ENCODE measurements at regions of chr6 and their contacts with region 1.

Region 1: DNA sequence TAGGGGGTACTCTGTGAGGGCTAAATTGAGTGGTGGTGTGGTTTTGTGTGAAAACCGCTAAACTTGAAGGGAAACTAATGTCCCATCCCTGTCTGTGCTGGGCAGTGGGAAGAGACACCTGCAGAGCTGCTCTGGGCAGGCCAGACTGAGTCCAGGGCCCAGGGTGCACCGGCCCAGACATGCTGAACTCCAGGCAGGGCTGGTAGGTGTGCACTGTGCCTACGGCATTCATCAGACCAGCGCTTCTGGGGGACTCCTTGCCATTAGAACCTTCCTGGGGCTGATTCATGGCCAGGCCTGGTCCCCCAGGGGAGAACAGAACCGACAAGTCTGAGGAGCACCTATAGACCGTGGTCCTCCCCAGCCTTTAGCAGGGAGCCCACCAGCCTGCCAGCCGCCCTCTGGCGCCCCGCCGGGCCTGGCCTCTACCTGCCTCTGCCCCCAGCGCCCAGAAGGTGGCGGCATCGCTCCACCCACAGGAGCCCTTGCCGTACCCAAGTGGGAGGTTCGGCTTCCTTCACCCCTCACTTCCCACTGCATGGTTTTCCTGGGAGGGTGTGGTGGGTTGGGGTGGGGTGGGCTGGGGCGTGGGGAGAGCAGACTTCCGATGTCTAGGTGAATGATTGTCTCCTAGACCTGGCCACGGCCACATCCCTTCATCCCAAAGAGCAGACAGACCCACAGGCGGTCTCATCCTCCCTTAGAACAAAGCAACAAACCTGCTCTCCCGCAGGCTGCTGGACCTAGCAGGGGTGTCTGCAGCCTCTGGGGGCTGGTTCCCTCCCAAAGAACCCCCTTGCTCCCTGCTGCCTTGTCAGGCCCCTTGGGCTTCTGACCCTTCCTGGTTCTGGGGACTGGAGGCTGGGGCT is 15.5 kb downstream of the CCDC167 start:
- DNase-seq: no peak
- ATAC-seq: peak; percentile 87
- H3K4me3 ChIP-seq: no peak overlapping the region
- H3K27ac ChIP-seq: peak overlapping the region; percentile 83
- H3K4me1 ChIP-seq: peaks cover 15% of the 10 kb centered on the region
- H3K27me3 ChIP-seq: no peaks in the 10 kb centered on the region
- CTCF ChIP-seq: peak; percentile 96

Region 2: GRCh38 chr6:37456816-37457560 is 27.2 kb before region 1 on chr6:
- CTCF ChIA-PET with region 1: no interaction called
- POLR2A ChIA-PET with region 1: no interaction called
- in situ Hi-C with region 1: no loop called
- intact Hi-C with region 1: no loop called
- DNase-seq: no peak
- ATAC-seq: no peak
- H3K4me3 ChIP-seq: no peak overlapping the region
- H3K27ac ChIP-seq: no peak overlapping the region
- H3K4me1 ChIP-seq: no peaks in the 10 kb centered on the region
- H3K27me3 ChIP-seq: no peaks in the 10 kb centered on the region
- CTCF ChIP-seq: no peak

Region 3: GRCh38 chr6:37514377-37514776 is 30.2 kb after region 1 on chr6:
- CTCF ChIA-PET with region 1: interaction called, 19 read pairs
- POLR2A ChIA-PET with region 1: no interaction called
- in situ Hi-C with region 1: no loop called
- intact Hi-C with region 1: no loop called
- DNase-seq: no peak
- ATAC-seq: peak; percentile 57
- H3K4me3 ChIP-seq: peak overlapping the region in 1 of 2 experiments; percentile 15; a peak in 2 of 4 replicates
- H3K27ac ChIP-seq: peak overlapping the region; percentile 91
- H3K4me1 ChIP-seq: peaks cover 68% of the 10 kb centered on the region
- H3K27me3 ChIP-seq: no peaks in the 10 kb centered on the region
- CTCF ChIP-seq: no peak

Region 4: DNA sequence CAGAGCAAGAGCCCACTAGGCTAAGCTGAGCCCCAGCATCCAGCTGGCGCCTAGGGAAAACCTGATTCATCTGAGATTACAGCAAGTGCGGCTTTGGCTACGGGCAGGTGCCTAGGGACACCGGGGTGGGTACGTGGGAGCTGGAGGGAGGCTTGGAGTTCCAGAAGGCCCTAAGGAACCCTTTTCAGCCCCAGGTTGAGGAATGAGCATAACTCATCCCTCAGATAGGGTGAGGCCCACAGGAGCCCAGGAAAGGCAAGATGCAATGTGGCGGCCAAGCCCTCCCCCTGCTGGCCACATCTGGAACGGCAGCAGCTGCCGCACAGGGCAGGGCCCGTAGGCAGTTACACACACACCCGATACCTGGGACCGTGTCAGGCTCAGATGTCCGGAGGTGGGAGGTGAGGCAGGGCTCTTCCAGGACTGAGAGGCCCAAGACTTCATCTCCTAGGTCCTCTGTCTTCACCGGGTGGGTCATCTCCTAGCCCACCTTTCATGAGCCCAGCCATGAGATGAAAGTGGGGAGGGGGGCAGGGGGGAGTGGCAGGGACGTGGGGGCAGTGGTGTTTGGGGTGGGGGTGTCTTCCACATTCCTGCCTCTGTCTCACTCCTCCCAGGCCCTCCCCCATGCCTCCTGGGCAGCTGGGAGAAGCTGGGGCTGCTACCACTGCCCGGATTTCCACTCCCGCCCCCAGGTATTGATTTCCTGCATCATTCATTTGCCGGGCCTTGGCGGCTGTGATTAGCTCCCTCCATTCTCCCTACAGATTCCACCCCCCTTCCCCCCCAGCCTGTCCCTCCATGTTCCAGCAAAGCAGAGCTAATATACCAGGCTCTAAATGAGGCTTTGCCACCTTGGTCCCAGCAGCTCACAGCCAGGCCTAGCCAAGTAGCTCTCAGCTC is 208.0 kb after region 1 on chr6:
- CTCF ChIA-PET with region 1: interaction called, 6 read pairs
- POLR2A ChIA-PET with region 1: no interaction called
- in situ Hi-C with region 1: no loop called
- intact Hi-C with region 1: loop called (anchors 5 kb)
- DNase-seq: peak; percentile 45
- ATAC-seq: peak; percentile 85
- H3K4me3 ChIP-seq: no peak overlapping the region
- H3K27ac ChIP-seq: peak overlapping the region; percentile 57
- H3K4me1 ChIP-seq: peaks cover 18% of the 10 kb centered on the region
- H3K27me3 ChIP-seq: no peaks in the 10 kb centered on the region
- CTCF ChIP-seq: peak; percentile 95